Activated T-helper 2 cell treated with anti-CD3 and anti-CD28 coated beads, Interferon-gamma antibody, Interleukin-2, Interleukin-4, amounts not matched to agents 10 μg/mL and 5 μg/mL and 100 μg/mL, durations not matched to agents 14 hours and 24 hours and 36 hours (primary cell): ENCODE measurements at regions of chr10 and their contacts with region 1.

Region 1: GRCh38 chr10:124688889-124689670 is 55.1 kb downstream of the FAM53B start:
- DNase-seq: peak; percentile 48
- H3K4me3 Mint-ChIP-seq: peak overlapping the region; percentile 26
- H3K27ac Mint-ChIP-seq: peak overlapping the region; percentile 80
- H3K4me1 Mint-ChIP-seq: peaks cover 69% of the 10 kb centered on the region
- H3K27me3 Mint-ChIP-seq: no peaks in the 10 kb centered on the region

Region 2: DNA sequence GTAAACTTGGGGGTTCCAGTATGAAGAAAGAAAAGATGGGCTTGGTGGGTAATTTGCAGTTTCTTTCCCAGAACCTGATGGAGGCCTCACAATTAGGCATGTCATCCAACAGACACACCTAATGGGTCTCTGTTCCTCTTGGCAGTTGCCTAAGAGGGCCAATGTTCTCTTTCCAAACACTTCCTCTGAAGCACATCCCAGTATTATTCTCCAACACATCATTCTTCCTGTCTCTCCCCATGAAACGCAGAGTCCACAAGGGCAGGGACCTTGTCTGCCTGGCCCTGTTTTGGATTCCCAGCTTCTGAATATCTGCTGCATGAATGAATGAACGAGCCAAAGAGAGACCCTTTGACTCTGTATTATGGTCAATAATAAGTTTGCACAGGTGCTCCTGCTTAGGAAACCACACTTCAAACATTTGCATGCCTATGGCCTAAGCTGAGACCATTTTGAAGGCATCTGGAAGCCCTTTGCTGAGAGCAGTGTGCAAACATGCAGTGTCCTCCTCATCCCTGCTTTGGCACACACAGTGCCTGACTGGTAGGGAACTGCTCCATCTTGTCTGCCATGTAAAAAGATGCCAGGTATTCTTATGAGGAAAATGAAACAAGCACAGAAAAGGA is 494.8 kb before region 1 on chr10:
- intact Hi-C with region 1: no loop called
- DNase-seq: no peak
- H3K4me3 Mint-ChIP-seq: no peak overlapping the region
- H3K27ac Mint-ChIP-seq: no peak overlapping the region
- H3K4me1 Mint-ChIP-seq: no peaks in the 10 kb centered on the region
- H3K27me3 Mint-ChIP-seq: peaks cover 19% of the 10 kb centered on the region

Region 3: DNA sequence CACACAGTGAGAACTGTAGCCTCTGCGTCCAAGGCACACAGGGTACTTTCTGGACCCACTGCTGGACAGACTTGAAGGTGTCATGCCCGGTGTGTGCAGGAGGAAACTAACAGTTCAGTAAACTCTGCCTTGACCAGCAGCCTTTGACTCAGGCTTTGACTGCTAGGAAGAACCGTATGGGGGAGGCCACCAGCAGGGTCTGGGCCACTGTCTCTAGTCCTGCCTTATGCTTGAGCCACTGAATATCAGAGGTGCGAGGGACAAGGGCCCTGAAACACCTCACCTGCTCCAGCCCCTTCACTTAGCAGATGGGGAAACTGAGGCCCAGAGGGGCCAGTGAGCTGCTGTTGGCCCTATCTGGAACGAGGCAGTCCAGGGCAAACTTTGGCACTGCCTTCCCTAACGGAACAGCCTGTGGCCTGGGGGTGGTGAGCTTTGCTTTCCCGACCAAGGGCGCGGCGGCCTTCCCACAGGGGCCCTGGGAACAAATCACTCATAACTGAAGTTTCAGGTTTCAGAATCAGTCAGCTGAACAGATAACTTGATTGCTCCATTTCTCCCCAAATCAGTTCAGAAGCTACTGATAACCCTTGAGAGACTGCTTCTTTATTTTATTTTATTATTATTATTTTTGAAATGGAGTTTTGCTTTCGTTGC is 74.9 kb before region 1 on chr10:
- intact Hi-C with region 1: loop called (anchors 1 kb)
- DNase-seq: peak; percentile 43
- H3K4me3 Mint-ChIP-seq: no peak overlapping the region
- H3K27ac Mint-ChIP-seq: no peak overlapping the region
- H3K4me1 Mint-ChIP-seq: peaks cover 23% of the 10 kb centered on the region
- H3K27me3 Mint-ChIP-seq: peaks cover 14% of the 10 kb centered on the region

Region 4: DNA sequence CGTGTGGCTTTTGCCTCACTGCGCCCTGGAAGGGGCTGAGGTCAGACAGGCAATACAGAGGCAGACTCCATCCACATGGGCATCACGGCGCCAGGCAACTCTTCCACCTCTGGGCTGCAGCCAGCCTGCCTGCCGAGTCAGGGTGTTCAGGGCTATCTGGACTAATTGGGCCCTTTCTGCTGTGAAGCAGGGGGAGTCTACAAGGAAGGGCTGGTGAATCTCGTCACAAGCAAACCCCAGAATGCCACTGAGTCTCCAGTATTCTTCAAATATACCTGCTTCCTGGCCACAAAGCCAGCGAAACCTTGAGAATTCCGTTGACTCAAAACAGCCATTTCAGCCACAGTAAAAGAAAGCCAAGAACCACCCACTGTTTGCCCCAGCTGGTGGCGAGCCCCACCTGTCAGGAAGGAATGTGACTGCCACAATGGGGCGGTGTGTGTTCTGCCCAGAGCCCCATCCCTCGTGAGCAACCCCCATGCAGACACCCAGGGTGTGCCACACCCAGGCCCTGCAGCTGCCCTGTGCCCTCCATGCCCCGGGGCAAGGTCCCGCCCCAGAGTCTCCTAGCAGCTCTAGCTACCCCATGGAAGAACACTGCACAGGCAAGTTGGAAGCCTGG is 62.2 kb before region 1 on chr10:
- intact Hi-C with region 1: loop called (anchors 1 kb)
- DNase-seq: peak; percentile 46
- H3K4me3 Mint-ChIP-seq: no peak overlapping the region
- H3K27ac Mint-ChIP-seq: no peak overlapping the region
- H3K4me1 Mint-ChIP-seq: peaks cover 22% of the 10 kb centered on the region
- H3K27me3 Mint-ChIP-seq: peaks cover 13% of the 10 kb centered on the region

Region 5: GRCh38 chr10:124647421-124648130 is 41.5 kb before region 1 on chr10:
- intact Hi-C with region 1: loop called (anchors 1 kb)
- DNase-seq: peak; percentile 70
- H3K4me3 Mint-ChIP-seq: peak overlapping the region; percentile 54
- H3K27ac Mint-ChIP-seq: peak overlapping the region; percentile 84
- H3K4me1 Mint-ChIP-seq: peaks cover 58% of the 10 kb centered on the region
- H3K27me3 Mint-ChIP-seq: no peaks in the 10 kb centered on the region

Region 6: DNA sequence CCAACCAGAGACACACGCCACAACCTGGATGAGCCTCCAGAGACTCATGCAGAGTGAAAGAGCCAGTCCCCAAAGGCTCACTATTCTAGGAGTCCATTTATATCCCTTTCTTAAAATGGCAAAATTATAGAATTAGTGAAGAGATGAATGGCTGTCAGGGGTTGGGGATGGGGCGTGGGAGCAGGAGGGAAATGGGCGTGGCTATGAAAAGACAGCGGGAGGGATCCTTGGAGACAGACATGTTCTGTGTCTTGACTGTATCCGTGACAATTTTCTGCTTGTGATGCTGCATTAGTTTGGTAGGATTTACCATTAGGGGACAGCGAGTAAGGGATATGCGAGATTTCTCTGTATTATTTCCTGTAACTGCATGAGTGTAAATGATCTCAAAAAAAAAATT is 22.1 kb after region 1 on chr10:
- intact Hi-C with region 1: no loop called
- DNase-seq: no peak
- H3K4me3 Mint-ChIP-seq: no peak overlapping the region
- H3K27ac Mint-ChIP-seq: no peak overlapping the region
- H3K4me1 Mint-ChIP-seq: peaks cover 70% of the 10 kb centered on the region
- H3K27me3 Mint-ChIP-seq: peaks cover under 1% of the 10 kb centered on the region

Region 7: GRCh38 chr10:124732931-124733570 is 44.0 kb after region 1 on chr10:
- intact Hi-C with region 1: loop called (anchors 1 kb)
- DNase-seq: no peak
- H3K4me3 Mint-ChIP-seq: peak overlapping the region; percentile 34
- H3K27ac Mint-ChIP-seq: peak overlapping the region; percentile 77
- H3K4me1 Mint-ChIP-seq: peaks cover 57% of the 10 kb centered on the region
- H3K27me3 Mint-ChIP-seq: no peaks in the 10 kb centered on the region